Panc1 (cell line): ENCODE measurements at regions of chr3 and their contacts with region 1.

Region 1: GRCh38 chr3:7194071-7194835 is 333.3 kb downstream of the GRM7 start:
- DNase-seq: no peak
- ATAC-seq: no peak
- H3K4me3 ChIP-seq: no peak overlapping the region
- H3K27ac ChIP-seq: no peak overlapping the region
- H3K4me1 ChIP-seq: no peaks in the 10 kb centered on the region
- H3K27me3 ChIP-seq: no peaks in the 10 kb centered on the region
- CTCF ChIP-seq: no peak

Region 2: DNA sequence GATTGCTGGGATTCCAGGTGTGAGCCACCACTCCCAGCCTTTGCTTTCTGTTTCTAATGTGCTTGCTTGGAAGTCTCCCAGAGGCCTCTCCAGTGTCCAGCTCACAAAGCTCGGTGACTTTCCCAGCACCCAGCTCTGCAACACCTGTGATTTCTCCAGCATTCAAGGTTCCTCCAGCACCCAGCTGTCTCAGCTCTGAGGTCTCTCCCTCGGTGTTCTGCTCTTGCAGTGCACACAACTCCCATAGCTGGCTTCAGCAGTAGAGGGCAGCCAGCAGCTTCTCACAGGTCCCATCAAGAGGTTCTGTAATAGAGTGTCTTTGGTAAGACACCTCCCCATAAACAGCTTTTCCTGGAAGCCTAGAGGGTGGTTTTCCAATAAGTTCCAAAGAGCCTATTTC is 258.3 kb before region 1 on chr3:
- CTCF ChIA-PET with region 1: no interaction called
- POLR2A ChIA-PET with region 1: no interaction called
- in situ Hi-C with region 1: no loop called
- intact Hi-C with region 1: no loop called
- DNase-seq: no peak
- ATAC-seq: no peak
- H3K4me3 ChIP-seq: no peak overlapping the region
- H3K27ac ChIP-seq: no peak overlapping the region
- H3K4me1 ChIP-seq: no peaks in the 10 kb centered on the region
- H3K27me3 ChIP-seq: no peaks in the 10 kb centered on the region
- CTCF ChIP-seq: no peak

Region 3: GRCh38 chr3:7095116-7095515 is 99.1 kb before region 1 on chr3:
- CTCF ChIA-PET with region 1: no interaction called
- POLR2A ChIA-PET with region 1: no interaction called
- in situ Hi-C with region 1: no loop called
- intact Hi-C with region 1: no loop called
- DNase-seq: no peak
- ATAC-seq: no peak
- H3K4me3 ChIP-seq: no peak overlapping the region
- H3K27ac ChIP-seq: no peak overlapping the region
- H3K4me1 ChIP-seq: no peaks in the 10 kb centered on the region
- H3K27me3 ChIP-seq: no peaks in the 10 kb centered on the region
- CTCF ChIP-seq: no peak

Region 4: GRCh38 chr3:8456825-8457555 is 1262.7 kb after region 1 on chr3:
- CTCF ChIA-PET with region 1: no interaction called
- POLR2A ChIA-PET with region 1: interaction called, 10 read pairs
- in situ Hi-C with region 1: no loop called
- intact Hi-C with region 1: no loop called
- DNase-seq: no peak
- ATAC-seq: no peak
- H3K4me3 ChIP-seq: no peak overlapping the region
- H3K27ac ChIP-seq: no peak overlapping the region
- H3K4me1 ChIP-seq: no peaks in the 10 kb centered on the region
- H3K27me3 ChIP-seq: no peaks in the 10 kb centered on the region
- CTCF ChIP-seq: no peak